ENCODE measurements at regions of chr2 and their contacts with region 1.

Region 1: DNA sequence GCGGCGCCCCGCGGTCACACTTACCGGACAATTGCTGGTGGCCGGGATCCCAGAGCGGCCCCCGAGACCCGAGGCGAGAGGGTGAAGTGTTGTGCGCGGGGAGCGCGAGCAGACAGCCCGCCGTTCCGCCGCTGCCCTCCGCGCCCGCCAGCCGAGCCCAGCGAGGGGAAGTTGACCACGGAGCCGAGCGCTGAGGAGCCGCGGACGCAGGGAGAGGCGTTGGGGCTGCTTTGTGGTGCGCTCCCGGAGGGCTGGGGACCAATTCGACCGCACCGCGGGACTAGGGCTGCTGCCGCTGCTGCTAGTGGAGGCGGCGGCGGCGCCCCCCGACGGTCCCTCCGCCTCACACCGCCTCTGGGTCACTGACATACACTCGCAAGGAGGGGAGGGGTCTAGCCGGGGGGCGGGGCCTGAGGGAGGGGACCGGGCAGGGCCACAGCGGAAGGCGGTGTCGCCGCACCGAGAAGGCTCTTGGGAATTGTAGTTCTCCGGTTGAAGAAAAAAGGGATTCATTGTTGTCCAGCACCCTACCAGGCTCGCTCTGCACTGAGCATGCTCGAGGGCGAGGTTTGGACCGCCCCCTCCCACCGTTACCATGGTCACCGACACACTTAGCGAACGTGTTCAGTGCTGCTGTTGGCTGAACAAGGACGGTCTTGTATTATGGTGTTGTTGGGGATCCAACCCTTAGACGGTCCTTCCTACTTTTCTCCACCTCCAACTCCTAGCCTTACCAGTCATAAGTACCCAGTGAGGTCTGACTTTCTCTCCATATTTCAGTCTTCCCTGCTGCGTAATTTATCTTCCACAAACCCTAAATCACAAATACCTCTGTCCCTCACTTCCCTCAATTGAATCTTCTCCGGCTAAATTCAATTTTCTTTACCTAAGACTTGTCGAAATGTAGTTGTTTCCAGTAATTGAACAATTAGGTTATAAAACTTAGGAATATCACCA is at the start of gene PELI1:
- DNase-seq: peak; percentile 98
- H3K4me3 ChIP-seq: peak within 1 kb of the TSS; percentile 99 to 100
- H3K27ac ChIP-seq: peak within 1 kb of the TSS; percentile 97
- H3K4me1 ChIP-seq: peaks cover 6% of the 10 kb centered on the region
- H3K27me3 ChIP-seq: no peaks in the 10 kb centered on the region
- CTCF ChIP-seq: peak in 2 of 4 experiments; percentile 8 to 22
- POLR2A ChIP-seq: peak; percentile 99
- total RNA-seq, gene PELI1: 16.9 to 32.9 TPM

Region 2: GRCh38 chr2:64052468-64053241 is 91.7 kb before region 1 on chr2:
- intact Hi-C with region 1: loop called (anchors 5 kb)
- DNase-seq: no peak
- H3K4me3 ChIP-seq: no peak overlapping the region
- H3K27ac ChIP-seq: no peak overlapping the region
- H3K4me1 ChIP-seq: no peaks in the 10 kb centered on the region
- H3K27me3 ChIP-seq: no peaks in the 10 kb centered on the region
- CTCF ChIP-seq: no peak
- POLR2A ChIP-seq: no peak

Region 3: DNA sequence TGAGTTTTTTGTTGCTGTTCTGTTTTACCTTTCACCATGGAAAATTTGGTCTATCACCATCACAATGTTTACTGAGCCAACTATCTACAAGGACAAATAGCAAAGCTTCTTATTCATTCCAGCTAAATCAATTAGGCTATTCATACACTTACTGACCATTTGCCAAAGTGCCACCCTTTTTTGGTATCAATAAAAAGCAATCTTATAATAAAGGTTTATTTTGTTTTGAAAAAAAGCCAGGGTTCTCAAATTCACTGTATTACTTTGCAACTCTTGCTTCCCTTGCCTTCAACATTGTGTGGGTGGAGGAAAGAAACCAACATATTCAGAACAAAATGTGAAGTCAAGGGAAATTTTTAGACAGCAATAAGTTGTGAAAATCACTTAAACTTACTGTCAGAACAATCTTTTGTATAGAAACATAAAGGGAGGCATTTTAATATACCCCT is 15.4 kb before region 1 on chr2:
- intact Hi-C with region 1: no loop called
- DNase-seq: no peak
- H3K4me3 ChIP-seq: no peak overlapping the region
- H3K27ac ChIP-seq: no peak overlapping the region
- H3K4me1 ChIP-seq: peaks cover 7% of the 10 kb centered on the region
- H3K27me3 ChIP-seq: no peaks in the 10 kb centered on the region
- CTCF ChIP-seq: no peak
- POLR2A ChIP-seq: no peak

Region 4: DNA sequence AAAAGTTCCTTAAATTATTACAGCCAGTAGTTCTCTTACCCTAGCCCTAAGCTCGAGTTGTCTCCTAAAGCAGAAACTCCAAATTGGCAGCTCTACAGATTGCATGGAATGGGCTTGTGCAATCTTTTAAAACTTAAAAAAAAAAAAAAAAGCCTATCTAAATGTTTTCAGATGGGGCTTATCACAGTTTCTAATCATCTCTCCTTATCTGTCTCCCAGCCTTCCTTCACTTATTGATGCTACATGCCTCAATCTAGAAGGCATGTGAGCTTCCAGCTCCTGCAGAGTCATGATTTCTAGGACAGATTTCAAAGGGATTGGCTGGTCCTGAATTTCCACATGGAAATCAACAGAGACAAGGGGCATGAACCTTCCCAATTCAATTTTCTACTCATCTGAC is 33.0 kb after region 1 on chr2:
- intact Hi-C with region 1: no loop called
- DNase-seq: no peak
- H3K4me3 ChIP-seq: no peak overlapping the region
- H3K27ac ChIP-seq: no peak overlapping the region
- H3K4me1 ChIP-seq: no peaks in the 10 kb centered on the region
- H3K27me3 ChIP-seq: no peaks in the 10 kb centered on the region
- CTCF ChIP-seq: no peak
- POLR2A ChIP-seq: no peak

Region 5: GRCh38 chr2:64311948-64312621 is 167.8 kb after region 1 on chr2:
- intact Hi-C with region 1: loop called (anchors 10 kb)
- DNase-seq: peak; percentile 92
- H3K4me3 ChIP-seq: no peak overlapping the region
- H3K27ac ChIP-seq: peak overlapping the region; percentile 78 to 83
- H3K4me1 ChIP-seq: peaks cover 4% of the 10 kb centered on the region
- H3K27me3 ChIP-seq: no peaks in the 10 kb centered on the region
- CTCF ChIP-seq: peak; percentile 34 to 75 (median 61)
- POLR2A ChIP-seq: no peak

Measured in prostate gland (tissue), 2 donors.